IMR-90 (cell line): ENCODE measurements at regions of chr4 and their contacts with region 1.

Region 1: GRCh38 chr4:185597532-185598188 is 62.4 kb upstream of the PDLIM3 start:
- DNase-seq: peak; percentile 82
- ATAC-seq: peak; percentile 87
- H3K4me3 ChIP-seq: no peak overlapping the region
- H3K27ac ChIP-seq: no peak overlapping the region
- H3K4me1 ChIP-seq: no peaks in the 10 kb centered on the region
- H3K27me3 ChIP-seq: peaks cover 11% of the 10 kb centered on the region
- CTCF ChIP-seq: peak; percentile 99
- POLR2A ChIP-seq: 0 out of 2 replicates have a peak, but pooled peaks have one; percentile 31
- RAD21 ChIP-seq: peak; percentile 98

Region 2: DNA sequence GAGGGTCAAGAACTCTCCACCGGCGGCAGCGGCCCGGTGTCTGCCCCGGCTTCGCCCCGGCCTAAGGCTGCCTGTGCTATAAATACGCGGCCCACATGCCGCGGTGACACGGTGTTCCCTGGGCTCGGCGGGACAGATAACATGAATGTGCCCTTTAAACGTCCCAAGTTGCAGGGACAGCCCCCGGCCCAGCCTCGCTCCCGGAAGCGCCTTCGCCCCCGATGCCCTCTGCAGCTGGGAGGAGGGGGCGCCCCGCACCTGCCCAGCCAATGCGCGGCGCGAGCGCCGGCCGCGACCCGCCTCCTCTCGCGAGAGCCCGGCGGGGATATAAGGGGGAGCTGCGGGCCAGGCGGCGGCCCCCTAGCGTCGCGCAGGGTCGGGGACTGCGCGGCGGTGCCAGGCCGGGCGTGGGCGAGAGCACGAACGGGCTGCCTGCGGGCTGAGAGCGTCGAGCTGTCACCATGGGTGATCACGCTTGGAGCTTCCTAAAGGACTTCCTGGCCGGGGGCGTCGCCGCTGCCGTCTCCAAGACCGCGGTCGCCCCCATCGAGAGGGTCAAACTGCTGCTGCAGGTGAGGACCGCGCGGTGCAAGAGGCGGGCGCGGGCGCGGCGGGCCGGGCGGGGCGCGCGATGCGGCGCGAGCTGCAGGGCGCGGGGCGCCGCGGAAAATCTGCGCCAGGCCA is 454.6 kb before region 1 on chr4 and contains the start of gene SLC25A4:
- CTCF ChIA-PET with region 1: no interaction called
- POLR2A ChIA-PET with region 1: no interaction called
- dilution Hi-C with region 1: no loop called
- in situ Hi-C with region 1: no loop called
- intact Hi-C with region 1: loop called (anchors 10 kb)
- DNase-seq: peak; percentile 62
- ATAC-seq: peak; percentile 98
- H3K4me3 ChIP-seq: peak within 1 kb of the TSS; percentile 81
- H3K27ac ChIP-seq: no peak within 1 kb of the TSS; the same call in 1 of the 2 replicates
- H3K4me1 ChIP-seq: no peaks in the 10 kb centered on the region; the same call in 1 of the 2 replicates
- H3K27me3 ChIP-seq: peaks cover 5% of the 10 kb centered on the region
- CTCF ChIP-seq: peak; percentile 53
- POLR2A ChIP-seq: peak; percentile 92
- RAD21 ChIP-seq: no peak; the same call in 1 of the 2 replicates
- total RNA-seq, gene SLC25A4: 16.0 and 21.9 TPM in 2 replicates

Region 3: DNA sequence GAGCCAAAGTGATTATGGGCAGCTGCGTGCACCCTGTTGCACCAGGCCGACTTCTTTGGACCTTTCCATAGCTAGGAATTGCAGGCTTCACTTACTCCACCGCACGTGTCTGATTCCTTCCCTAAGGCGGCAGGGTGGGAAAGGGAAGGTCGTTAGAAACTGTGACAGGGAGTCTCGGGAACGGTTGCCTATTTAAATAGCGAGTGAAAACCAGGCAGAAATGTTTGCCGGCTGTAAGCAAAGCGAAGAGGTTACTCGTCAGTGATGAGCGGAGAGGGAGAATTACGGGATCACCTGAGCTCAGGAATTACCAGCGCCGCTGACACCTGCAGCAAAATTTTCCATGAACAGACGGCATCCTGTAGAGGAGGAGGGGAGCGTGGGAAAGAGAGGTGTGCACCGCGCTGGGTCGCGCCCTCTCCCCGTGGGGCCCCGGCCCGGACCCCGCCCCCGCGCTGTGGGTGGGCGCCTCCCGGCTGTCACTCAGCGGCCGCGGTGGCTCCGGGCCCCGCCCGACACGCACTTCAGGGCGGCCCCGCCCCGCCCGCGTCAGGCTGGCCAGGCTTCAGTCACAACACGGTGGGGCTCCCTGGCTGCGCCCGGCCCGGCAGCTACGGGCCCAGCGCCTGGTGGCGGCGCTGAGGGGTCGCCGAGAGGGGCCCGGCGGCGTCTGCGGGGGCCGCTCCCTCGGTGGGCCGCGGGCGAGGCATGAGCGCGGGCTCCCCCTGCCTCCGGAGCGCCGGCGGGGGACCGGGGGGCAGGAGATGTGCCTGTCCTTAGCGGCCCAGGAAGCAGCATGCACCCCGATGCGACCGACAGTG is 388.4 kb before region 1 on chr4 and contains the start of gene SNX25:
- CTCF ChIA-PET with region 1: no interaction called
- POLR2A ChIA-PET with region 1: no interaction called
- dilution Hi-C with region 1: no loop called
- in situ Hi-C with region 1: no loop called
- intact Hi-C with region 1: loop called (anchors 1 kb)
- DNase-seq: peak; percentile 65
- ATAC-seq: peak; percentile 88
- H3K4me3 ChIP-seq: peak within 1 kb of the TSS; percentile 93
- H3K27ac ChIP-seq: peak within 1 kb of the TSS; percentile 73
- H3K4me1 ChIP-seq: peaks cover 8% of the 10 kb centered on the region
- H3K27me3 ChIP-seq: no peaks in the 10 kb centered on the region
- CTCF ChIP-seq: peak; percentile 23; the same call in 1 of the 2 replicates
- POLR2A ChIP-seq: peak; percentile 78
- RAD21 ChIP-seq: peak; percentile 29
- total RNA-seq, gene SNX25: 28.3 and 30.0 TPM in 2 replicates

Region 4: GRCh38 chr4:185323606-185324005 is 274.1 kb before region 1 on chr4:
- CTCF ChIA-PET with region 1: no interaction called
- POLR2A ChIA-PET with region 1: no interaction called
- dilution Hi-C with region 1: no loop called
- in situ Hi-C with region 1: no loop called
- intact Hi-C with region 1: loop called (anchors 5 kb)
- DNase-seq: peak; percentile 53
- ATAC-seq: no peak
- H3K4me3 ChIP-seq: no peak overlapping the region
- H3K27ac ChIP-seq: no peak overlapping the region
- H3K4me1 ChIP-seq: peaks cover 2% of the 10 kb centered on the region; the same call in 1 of the 2 replicates
- H3K27me3 ChIP-seq: no peaks in the 10 kb centered on the region
- CTCF ChIP-seq: no peak
- POLR2A ChIP-seq: no peak
- RAD21 ChIP-seq: no peak

Region 5: DNA sequence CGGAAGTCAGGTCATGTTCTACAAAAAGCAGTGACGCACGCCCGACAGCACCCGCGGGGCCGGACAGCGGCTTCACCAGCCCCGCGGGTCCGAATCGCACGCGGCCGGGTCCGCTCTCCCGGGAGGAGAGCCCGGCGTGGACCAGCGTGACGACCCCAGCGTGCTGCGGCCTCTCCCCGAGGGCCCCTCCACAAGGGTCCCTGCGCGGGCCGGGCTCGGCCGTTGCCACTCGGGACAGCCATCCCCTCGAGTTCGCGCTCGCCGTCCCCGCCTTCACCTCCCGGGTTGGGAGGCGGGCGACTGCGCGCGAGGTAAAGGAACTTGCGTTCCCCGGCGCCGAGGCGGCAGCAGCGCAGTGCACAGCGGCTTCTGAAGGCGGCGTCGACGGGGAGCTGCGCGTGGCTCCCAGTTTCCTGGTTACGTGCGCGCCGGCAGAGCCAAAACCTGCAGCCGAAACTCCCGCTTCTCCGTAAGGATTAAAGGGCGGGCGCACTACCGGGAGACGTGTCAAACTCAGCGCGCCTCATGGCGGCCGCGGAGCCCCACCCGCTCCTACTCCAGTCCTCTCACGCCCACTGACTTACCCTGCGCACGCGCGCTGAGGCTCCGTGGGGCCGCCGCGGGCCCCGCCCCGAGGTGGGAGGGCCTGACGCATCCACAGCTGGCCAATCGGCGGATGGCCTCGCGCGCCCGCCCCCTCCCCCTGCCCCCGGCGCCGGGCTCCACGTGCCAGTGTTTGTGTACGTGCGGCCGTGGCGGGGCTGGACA is 201.5 kb before region 1 on chr4:
- CTCF ChIA-PET with region 1: no interaction called
- POLR2A ChIA-PET with region 1: no interaction called
- dilution Hi-C with region 1: no loop called
- in situ Hi-C with region 1: no loop called
- intact Hi-C with region 1: loop called (anchors 2 kb)
- DNase-seq: peak; percentile 97
- ATAC-seq: peak; percentile 97
- H3K4me3 ChIP-seq: peak overlapping the region; percentile 71
- H3K27ac ChIP-seq: peak overlapping the region; percentile 66
- H3K4me1 ChIP-seq: no peaks in the 10 kb centered on the region; the same call in 1 of the 2 replicates
- H3K27me3 ChIP-seq: no peaks in the 10 kb centered on the region
- CTCF ChIP-seq: no peak
- POLR2A ChIP-seq: peak; percentile 49
- RAD21 ChIP-seq: peak; percentile 6; the same call in 1 of the 2 replicates

Region 6: DNA sequence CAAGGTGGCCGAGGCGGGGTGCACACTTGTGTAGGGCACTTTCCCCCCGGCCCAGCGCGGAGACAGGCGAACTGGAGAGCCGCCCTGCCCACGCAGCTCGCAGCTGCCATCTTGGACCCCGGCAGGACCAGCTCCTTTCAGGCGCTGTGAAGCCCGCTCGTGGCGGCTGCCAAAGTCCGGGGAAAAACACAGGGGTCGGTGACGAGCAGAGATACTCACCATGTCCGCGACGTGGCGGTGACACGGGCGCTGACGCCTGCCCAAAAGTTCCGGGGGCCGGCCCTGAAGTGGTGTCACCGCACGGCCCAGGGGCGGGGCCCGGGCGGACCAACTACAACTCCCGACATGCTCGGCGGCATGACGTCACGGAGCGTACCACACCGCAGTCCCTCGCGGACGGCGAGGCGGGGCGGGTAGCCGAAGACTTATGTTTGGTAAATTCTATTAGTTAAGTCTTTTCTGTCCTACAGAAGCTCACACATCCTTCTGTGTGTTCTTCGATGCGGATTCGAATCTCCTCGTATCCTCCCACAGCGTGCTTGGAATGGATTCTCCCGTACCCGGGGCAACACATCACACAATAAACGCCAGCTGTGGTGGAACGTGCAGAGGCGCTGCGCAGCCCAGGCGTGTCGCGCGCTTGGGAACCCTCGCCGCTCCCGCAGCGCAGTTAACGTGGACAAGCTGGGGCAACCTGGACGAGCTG is 171.9 kb before region 1 on chr4 and contains the start of gene UFSP2:
- CTCF ChIA-PET with region 1: interaction called, 3 read pairs
- POLR2A ChIA-PET with region 1: no interaction called
- dilution Hi-C with region 1: no loop called
- in situ Hi-C with region 1: no loop called
- intact Hi-C with region 1: loop called (anchors 5 kb)
- DNase-seq: peak; percentile 88
- ATAC-seq: peak; percentile 93
- H3K4me3 ChIP-seq: peak within 1 kb of the TSS; percentile 63
- H3K27ac ChIP-seq: peak within 1 kb of the TSS; percentile 96
- H3K4me1 ChIP-seq: peaks cover 5% of the 10 kb centered on the region; the same call in 1 of the 2 replicates
- H3K27me3 ChIP-seq: no peaks in the 10 kb centered on the region
- CTCF ChIP-seq: no peak
- POLR2A ChIP-seq: peak; percentile 72; the same call in 1 of the 2 replicates
- RAD21 ChIP-seq: peak; percentile 7; the same call in 1 of the 2 replicates
- total RNA-seq, gene UFSP2: 43.7 and 43.9 TPM in 2 replicates

Region 7: GRCh38 chr4:185471235-185472102 is 126.2 kb before region 1 on chr4 and contains the start of gene CCDC110:
- CTCF ChIA-PET with region 1: interaction called, 6 read pairs
- POLR2A ChIA-PET with region 1: no interaction called
- dilution Hi-C with region 1: no loop called
- in situ Hi-C with region 1: no loop called
- intact Hi-C with region 1: loop called (anchors 1 kb)
- DNase-seq: peak; percentile 92
- ATAC-seq: peak; percentile 97
- H3K4me3 ChIP-seq: peak within 1 kb of the TSS; percentile 89
- H3K27ac ChIP-seq: peak within 1 kb of the TSS; percentile 16; the same call in 1 of the 2 replicates
- H3K4me1 ChIP-seq: peaks cover 3% of the 10 kb centered on the region; the same call in 1 of the 2 replicates
- H3K27me3 ChIP-seq: no peaks in the 10 kb centered on the region
- CTCF ChIP-seq: peak; percentile 75
- POLR2A ChIP-seq: no peak
- RAD21 ChIP-seq: peak; percentile 66
- total RNA-seq, gene CCDC110: 0.90 and 1.4 TPM in 2 replicates